Esophagus muscularis mucosa (tissue), 4 donors: ENCODE measurements at regions of chr3 and their contacts with region 1.

Region 1: GRCh38 chr3:128617557-128618397 is 32.8 kb downstream of the RPN1 start:
- DNase-seq: peak; percentile 99
- H3K4me3 ChIP-seq: peak overlapping the region; percentile 68 to 87 (median 76)
- H3K27ac ChIP-seq: peak overlapping the region; percentile 83 to 88 (median 86)
- H3K4me1 ChIP-seq: peaks cover 14 to 34% (median 25%) of the 10 kb centered on the region in 4 donors
- H3K27me3 ChIP-seq: no peaks in the 10 kb centered on the region
- CTCF ChIP-seq: peak; percentile 90 to 99 (median 98)
- EP300 ChIP-seq: no peak
- POLR2A ChIP-seq: no peak

Region 2: GRCh38 chr3:128153156-128154041 is 464.4 kb before region 1 on chr3 and contains the start of gene EEFSEC:
- intact Hi-C with region 1: loop called (anchors 10 kb)
- DNase-seq: peak; percentile 94
- H3K4me3 ChIP-seq: peak within 1 kb of the TSS; percentile 81 to 100 (median 94)
- H3K27ac ChIP-seq: peak within 1 kb of the TSS; percentile 87 to 93 (median 90)
- H3K4me1 ChIP-seq: peaks cover 8 to 12% (median 11%) of the 10 kb centered on the region in 4 donors
- H3K27me3 ChIP-seq: no peaks in the 10 kb centered on the region
- CTCF ChIP-seq: no peak
- EP300 ChIP-seq: no peak
- POLR2A ChIP-seq: peak; percentile 34
- total RNA-seq, gene EEFSEC: 9.1 to 17.4 (median 15.8) TPM

Region 3: GRCh38 chr3:128650096-128651050 is 32.6 kb after region 1 on chr3 and contains the start of gene RPN1:
- intact Hi-C with region 1: loop called (anchors 5 kb)
- DNase-seq: peak; percentile 98
- H3K4me3 ChIP-seq: peak within 1 kb of the TSS; percentile 82 to 100 (median 96)
- H3K27ac ChIP-seq: peak within 1 kb of the TSS; percentile 98 to 100 (median 98)
- H3K4me1 ChIP-seq: peaks cover 12 to 43% (median 33%) of the 10 kb centered on the region in 4 donors
- H3K27me3 ChIP-seq: no peaks in the 10 kb centered on the region
- CTCF ChIP-seq: no peak
- EP300 ChIP-seq: no peak
- POLR2A ChIP-seq: peak; percentile 60
- total RNA-seq, gene RPN1: 131 to 198 (median 177) TPM

Region 4: DNA sequence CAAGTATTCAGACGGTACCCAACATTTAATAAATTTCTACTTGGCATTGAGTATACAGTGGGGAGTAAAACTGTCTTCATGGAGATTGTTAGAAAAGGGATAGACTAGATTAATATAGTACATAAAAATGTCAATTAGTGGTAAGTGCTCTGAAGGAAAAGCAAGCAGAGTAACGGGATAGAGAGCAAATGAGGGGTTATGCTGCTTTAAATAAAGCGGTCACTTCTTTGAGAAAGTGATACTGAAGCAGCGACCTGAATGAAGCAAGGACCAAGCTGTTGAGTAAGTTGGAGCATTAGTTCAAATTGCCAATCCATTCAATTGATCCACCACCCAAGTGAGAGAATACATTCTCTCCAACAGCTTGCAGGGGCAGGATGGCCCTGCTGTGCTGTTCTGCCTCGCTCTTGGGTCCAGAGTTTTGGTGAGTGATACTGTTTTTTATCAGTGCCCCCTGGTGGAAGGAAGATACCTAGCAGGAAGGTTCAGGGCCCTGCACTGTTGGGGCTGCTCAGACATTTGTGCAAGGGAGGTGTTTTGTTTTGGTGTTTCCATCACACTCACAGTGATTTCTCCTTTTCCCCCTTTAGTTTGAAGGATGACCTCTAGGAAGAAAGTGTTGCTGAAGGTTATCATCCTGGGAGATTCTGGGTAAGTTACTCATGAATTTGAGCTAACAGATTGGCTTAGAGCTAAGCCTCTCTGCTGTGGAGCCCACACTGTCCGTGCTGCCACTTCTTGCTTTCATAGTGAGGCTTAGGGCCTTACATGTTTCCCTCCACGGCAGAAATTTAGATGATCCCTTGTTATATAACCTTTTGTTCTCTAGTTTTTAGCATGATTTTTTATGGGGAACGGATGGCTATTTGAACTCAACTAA is 177.2 kb after region 1 on chr3:
- intact Hi-C with region 1: loop called (anchors 5 kb)
- DNase-seq: peak; percentile 93
- H3K4me3 ChIP-seq: no peak overlapping the region
- H3K27ac ChIP-seq: peak overlapping the region; percentile 21 to 54 (median 54)
- H3K4me1 ChIP-seq: peaks cover 33 to 54% (median 43%) of the 10 kb centered on the region in 4 donors
- H3K27me3 ChIP-seq: no peaks in the 10 kb centered on the region
- CTCF ChIP-seq: peak; percentile 80 to 85 (median 81)
- EP300 ChIP-seq: no peak
- POLR2A ChIP-seq: no peak

Region 5: GRCh38 chr3:128845778-128846485 is 228.2 kb after region 1 on chr3:
- intact Hi-C with region 1: loop called (anchors 2 kb)
- DNase-seq: peak; percentile 95
- H3K4me3 ChIP-seq: peak overlapping the region; percentile 58 to 64 (median 60)
- H3K27ac ChIP-seq: peak overlapping the region; percentile 72 to 79 (median 78)
- H3K4me1 ChIP-seq: peaks cover 14 to 20% (median 16%) of the 10 kb centered on the region in 4 donors
- H3K27me3 ChIP-seq: no peaks in the 10 kb centered on the region
- CTCF ChIP-seq: peak; percentile 56 to 67 (median 59)
- EP300 ChIP-seq: no peak
- POLR2A ChIP-seq: no peak